Adrenal gland (tissue), 19 donors: ENCODE measurements at regions of chr5 and their contacts with region 1.

Region 1: GRCh38 chr5:177390363-177391300 is 6.4 kb downstream of the SLC34A1 start:
- DNase-seq: peak; percentile 72 to 94 (median 85)
- H3K4me3 ChIP-seq: no peak overlapping the region
- H3K27ac ChIP-seq: no peak overlapping the region
- H3K4me1 ChIP-seq: no peaks in the 10 kb centered on the region
- H3K27me3 ChIP-seq: peaks cover 3% of the 10 kb centered on the region
- CTCF ChIP-seq: peak; percentile 96 to 99 (median 97)
- POLR2A ChIP-seq: no peak

Region 2: DNA sequence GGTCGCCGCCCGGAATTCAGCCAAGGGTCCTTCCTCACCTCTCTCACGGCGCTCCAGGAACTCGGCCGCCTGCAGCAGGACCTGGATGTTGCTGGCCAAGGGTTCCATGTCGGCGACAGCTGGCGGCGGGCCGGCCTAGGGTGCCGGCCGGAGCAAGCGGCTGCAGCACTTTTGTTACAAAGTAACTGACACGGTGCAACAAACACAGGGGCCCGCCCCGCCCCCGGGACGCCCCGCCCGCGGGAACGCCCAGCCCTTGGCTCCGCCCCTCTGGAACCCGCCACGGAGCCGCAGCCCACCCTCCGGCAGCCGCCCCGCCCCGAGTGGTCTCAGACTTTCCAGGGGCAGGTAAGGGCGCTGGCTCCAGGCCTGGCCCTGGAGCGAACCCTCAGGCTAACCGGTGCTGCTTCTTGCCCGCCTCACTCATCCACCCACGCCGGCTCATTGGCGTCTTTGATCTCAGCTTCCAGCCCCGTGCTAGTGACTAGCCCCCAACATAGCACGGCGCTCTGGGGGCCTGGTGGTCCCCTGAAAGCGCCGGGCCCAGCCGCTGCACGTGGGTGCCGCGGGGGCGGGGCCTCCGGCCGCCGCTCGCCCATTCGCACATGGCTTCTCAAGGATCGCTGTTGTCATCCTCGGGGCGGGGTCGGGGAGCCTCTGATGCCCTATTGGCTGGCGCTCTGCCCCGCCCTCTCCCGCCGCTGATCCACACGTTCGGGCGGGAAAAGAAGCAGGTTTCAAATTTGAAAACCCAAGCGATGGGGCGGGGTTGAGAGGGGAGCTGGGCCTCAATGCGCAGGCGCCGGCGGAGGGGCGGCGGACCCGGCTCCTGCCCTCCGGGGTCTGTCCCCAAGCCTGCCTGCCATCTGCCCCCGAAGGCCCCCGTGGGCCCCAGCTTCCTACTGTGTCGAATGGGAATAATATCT is 78.6 kb before region 1 on chr5 and contains the start of gene MXD3:
- intact Hi-C with region 1: loop called in 1 of 2 experiments (anchors 10 kb)
- DNase-seq: peak; percentile 95 to 99 (median 98)
- H3K4me3 ChIP-seq: peak within 1 kb of the TSS in 2 of 4 donors; percentile 16 to 60
- H3K27ac ChIP-seq: peak within 1 kb of the TSS in 1 of 5 donors; percentile 69
- H3K4me1 ChIP-seq: peaks cover 12 to 19% of the 10 kb centered on the region in 2 donors
- H3K27me3 ChIP-seq: no peaks in the 10 kb centered on the region
- CTCF ChIP-seq: no peak
- POLR2A ChIP-seq: no peak
- total RNA-seq, gene MXD3: 0.85 to 18.1 (median 3.5) TPM

Region 3: DNA sequence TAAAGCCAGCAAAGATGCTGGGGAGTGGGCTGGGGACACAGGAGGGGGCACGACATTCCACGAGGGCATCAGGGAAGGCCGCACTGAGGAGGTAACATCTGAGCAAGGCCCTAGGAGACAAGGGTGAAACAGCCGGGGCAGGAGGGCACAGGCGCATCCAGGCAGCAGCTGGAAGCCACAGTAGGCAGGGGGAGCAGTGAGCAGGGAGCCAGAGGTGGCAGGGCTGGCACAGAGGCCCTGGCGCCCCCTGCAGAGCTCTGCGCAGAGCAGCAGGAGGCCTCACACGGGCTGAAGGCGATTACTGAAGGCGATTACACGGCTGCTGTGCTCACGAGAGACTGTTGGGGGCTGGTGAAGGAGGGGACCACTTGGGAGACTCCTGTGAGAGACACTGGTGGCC is 54.5 kb before region 1 on chr5:
- intact Hi-C with region 1: no loop called
- DNase-seq: no peak
- H3K4me3 ChIP-seq: no peak overlapping the region
- H3K27ac ChIP-seq: no peak overlapping the region
- H3K4me1 ChIP-seq: no peaks in the 10 kb centered on the region
- H3K27me3 ChIP-seq: no peaks in the 10 kb centered on the region
- CTCF ChIP-seq: no peak
- POLR2A ChIP-seq: no peak

Region 4: GRCh38 chr5:177500685-177501522 is 110.3 kb after region 1 on chr5:
- intact Hi-C with region 1: loop called (anchors 5 kb)
- DNase-seq: peak; percentile 85 to 96 (median 93)
- H3K4me3 ChIP-seq: no peak overlapping the region
- H3K27ac ChIP-seq: no peak overlapping the region
- H3K4me1 ChIP-seq: peaks cover 17 to 18% of the 10 kb centered on the region in 2 donors
- H3K27me3 ChIP-seq: no peaks in the 10 kb centered on the region
- CTCF ChIP-seq: peak; percentile 86 to 95 (median 94)
- POLR2A ChIP-seq: no peak